ENCODE measurements at regions of chr1 and their contacts with region 1.

Region 1: GRCh38 chr1:66294692-66295384 is 239.1 kb upstream of the SGIP1 start:
- DNase-seq: peak; percentile 85
- H3K4me3 Mint-ChIP-seq: peak overlapping the region; percentile 41
- H3K27ac Mint-ChIP-seq: peak overlapping the region; percentile 99
- H3K4me1 Mint-ChIP-seq: peaks cover 42% of the 10 kb centered on the region
- H3K27me3 Mint-ChIP-seq: no peaks in the 10 kb centered on the region
- CTCF ChIP-seq: no peak

Region 2: GRCh38 chr1:66262211-66262963 is 32.5 kb before region 1 on chr1:
- CTCF ChIA-PET with region 1: interaction called, 3 read pairs
- POLR2A ChIA-PET with region 1: interaction called, 14 read pairs
- intact Hi-C with region 1: no loop called
- DNase-seq: peak; percentile 96
- H3K4me3 Mint-ChIP-seq: peak overlapping the region; percentile 9
- H3K27ac Mint-ChIP-seq: peak overlapping the region; percentile 86
- H3K4me1 Mint-ChIP-seq: peaks cover 43% of the 10 kb centered on the region
- H3K27me3 Mint-ChIP-seq: no peaks in the 10 kb centered on the region
- CTCF ChIP-seq: no peak

Region 3: DNA sequence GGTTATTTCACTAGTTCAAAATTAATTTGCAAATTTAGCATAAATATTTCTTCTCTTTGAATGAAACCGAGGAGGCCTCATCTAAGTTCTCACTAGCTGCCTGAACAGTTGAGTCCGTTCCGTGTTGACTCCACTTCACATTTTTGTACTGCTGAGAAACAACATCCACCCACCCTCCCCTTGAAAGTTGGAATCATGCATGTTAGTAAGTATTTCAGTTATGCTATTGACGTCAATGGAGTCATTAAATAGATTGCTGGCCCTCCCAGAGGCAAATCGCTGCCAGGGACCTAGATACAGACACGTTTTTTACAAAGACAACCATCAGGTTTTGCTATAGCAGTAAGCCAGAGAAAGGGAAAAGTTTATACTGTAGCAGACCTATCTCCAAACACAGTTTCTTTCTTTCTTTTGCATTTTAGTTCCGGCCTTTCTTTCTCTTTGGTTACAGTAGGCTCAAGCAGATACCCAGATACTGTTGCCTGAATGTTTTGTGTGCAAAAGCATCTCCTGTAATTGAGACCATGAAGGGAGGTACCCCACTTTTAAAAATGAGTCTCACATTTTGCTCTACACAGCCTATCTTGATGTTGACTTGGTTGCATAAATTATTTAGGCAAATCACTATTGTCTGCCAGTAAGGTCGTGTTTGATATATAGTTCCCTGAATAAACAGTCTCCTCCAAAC is 23.5 kb before region 1 on chr1:
- CTCF ChIA-PET with region 1: interaction called, 3 read pairs
- POLR2A ChIA-PET with region 1: interaction called, 34 read pairs
- intact Hi-C with region 1: loop called (anchors 1 kb)
- DNase-seq: peak; percentile 97
- H3K4me3 Mint-ChIP-seq: peak overlapping the region; percentile 49
- H3K27ac Mint-ChIP-seq: peak overlapping the region; percentile 92
- H3K4me1 Mint-ChIP-seq: peaks cover 43% of the 10 kb centered on the region
- H3K27me3 Mint-ChIP-seq: no peaks in the 10 kb centered on the region
- CTCF ChIP-seq: no peak

Region 4: DNA sequence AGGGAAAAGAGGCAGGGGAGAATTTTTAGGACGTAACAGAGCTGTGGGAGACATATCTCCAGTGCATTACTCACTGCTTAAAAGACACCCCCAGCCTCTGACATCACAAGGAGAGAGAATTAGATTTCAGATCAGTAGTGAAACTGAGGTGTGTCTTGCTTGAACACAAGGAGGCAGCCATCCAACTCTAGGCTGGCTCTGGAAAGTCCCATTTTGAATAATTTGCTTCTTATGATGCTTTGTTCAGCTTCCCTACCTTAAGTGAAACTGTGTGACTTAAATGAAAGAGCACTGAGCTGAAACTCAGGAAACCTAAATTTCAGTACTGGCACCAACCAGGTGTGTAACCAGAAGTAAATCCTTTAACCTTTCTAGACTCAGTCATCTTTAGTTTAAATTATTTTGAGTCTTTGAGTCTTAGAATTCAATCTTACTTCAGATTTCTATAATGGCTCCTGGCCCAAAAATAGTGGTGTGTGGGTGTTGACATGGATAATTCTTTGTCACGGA is 12.4 kb before region 1 on chr1:
- CTCF ChIA-PET with region 1: interaction called, 4 read pairs
- POLR2A ChIA-PET with region 1: interaction called, 29 read pairs
- intact Hi-C with region 1: no loop called
- DNase-seq: peak; percentile 87
- H3K4me3 Mint-ChIP-seq: no peak overlapping the region
- H3K27ac Mint-ChIP-seq: peak overlapping the region; percentile 90
- H3K4me1 Mint-ChIP-seq: peaks cover 22% of the 10 kb centered on the region
- H3K27me3 Mint-ChIP-seq: no peaks in the 10 kb centered on the region
- CTCF ChIP-seq: no peak

Measured in MCF 10A (cell line).